ENCODE measurements at regions of chr6 and their contacts with region 1.

Region 1: DNA sequence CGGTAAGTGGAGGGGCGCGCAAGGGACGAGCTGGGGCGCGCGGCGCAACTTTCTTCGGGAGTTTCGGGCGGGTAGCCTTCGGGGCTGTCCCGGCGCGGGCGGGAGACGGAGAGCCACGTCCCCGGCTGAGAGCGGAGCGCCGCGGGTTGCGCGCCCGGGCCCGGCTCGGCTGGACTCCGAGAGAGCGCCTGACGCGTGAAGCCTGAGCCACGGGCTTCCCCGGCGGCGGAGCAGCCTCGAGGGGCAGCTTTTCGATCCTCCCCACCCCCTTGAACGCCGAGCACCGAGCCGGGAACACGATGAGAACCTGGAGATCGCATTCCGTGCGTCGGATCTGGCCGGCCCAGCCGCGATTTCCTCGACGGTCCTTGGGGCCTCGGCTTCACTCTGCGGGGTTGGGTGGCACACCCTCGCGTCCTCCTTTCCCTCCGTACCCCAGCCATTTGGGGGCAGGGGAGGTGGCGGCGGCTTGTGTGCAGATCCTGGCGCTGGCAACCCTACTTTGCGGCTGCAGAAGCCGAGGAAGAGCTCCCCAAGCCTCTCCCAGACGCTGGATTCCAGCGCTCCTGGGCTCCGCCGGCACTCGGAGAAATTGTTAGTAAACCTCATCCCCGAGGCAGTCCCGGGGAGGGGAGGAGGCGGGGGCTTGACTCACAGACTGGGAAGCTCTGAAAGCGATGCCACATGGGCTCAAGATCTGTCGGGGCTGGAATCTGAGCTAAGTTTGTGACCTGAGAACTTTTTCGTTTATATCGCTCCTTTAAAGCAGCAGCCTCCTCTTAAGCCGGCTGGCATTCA is 572 bp downstream of the DSE start:
- DNase-seq: peak; percentile 45 to 67
- ATAC-seq: peak; percentile 62 to 70
- H3K4me3 ChIP-seq: peak overlapping the region; percentile 80 to 89 (median 88)
- H3K27ac ChIP-seq: peak overlapping the region; percentile 86 to 91 (median 89)
- H3K4me1 ChIP-seq: peaks cover 4 to 18% of the 10 kb centered on the region in 2 donors
- H3K27me3 ChIP-seq: no peaks in the 10 kb centered on the region
- CTCF ChIP-seq: no peak
- POLR2A ChIP-seq: peak in 1 of 2 donors; percentile 25

Region 2: DNA sequence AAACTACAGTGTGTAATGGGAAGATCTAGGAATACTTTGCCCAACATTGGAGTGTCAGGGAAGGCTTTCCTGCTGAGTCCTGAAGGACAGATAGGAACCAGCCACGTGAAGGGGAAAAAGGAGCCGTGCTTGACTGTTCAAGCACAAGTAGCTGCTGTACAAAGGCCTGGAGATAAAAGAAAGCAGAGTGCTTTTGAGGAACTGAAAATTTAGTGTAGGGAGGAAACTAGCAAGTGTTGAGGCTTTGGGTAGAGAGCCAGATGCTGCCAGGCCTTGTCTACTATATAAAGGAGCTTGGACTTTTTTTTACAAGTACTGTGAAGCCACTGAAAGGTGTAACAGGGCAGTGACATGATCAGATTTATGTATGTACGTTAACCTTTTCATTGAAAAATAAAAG is 38.4 kb after region 1 on chr6:
- in situ Hi-C with region 1: no loop called
- intact Hi-C with region 1: loop called (anchors 2 kb)
- DNase-seq: no peak
- ATAC-seq: no peak
- H3K4me3 ChIP-seq: no peak overlapping the region
- H3K27ac ChIP-seq: peak overlapping the region; percentile 70 to 85 (median 78)
- H3K4me1 ChIP-seq: peaks cover 65 to 75% of the 10 kb centered on the region in 2 donors
- H3K27me3 ChIP-seq: no peaks in the 10 kb centered on the region
- CTCF ChIP-seq: no peak
- POLR2A ChIP-seq: no peak

Region 3: GRCh38 chr6:116439522-116440051 is 68.3 kb after region 1 on chr6:
- in situ Hi-C with region 1: no loop called
- intact Hi-C with region 1: no loop called
- DNase-seq: no peak
- ATAC-seq: no peak
- H3K4me3 ChIP-seq: no peak overlapping the region
- H3K27ac ChIP-seq: no peak overlapping the region
- H3K4me1 ChIP-seq: peaks cover 0 to 12% of the 10 kb centered on the region in 2 donors
- H3K27me3 ChIP-seq: no peaks in the 10 kb centered on the region
- CTCF ChIP-seq: no peak
- POLR2A ChIP-seq: no peak